Heart left ventricle (tissue), 16 donors: ENCODE measurements at regions of chr10 and their contacts with region 1.

Region 1: GRCh38 chr10:95480102-95480900 is 80.9 kb downstream of the SORBS1 start:
- DNase-seq: peak in 4 of 5 donors; percentile 61 to 74 (median 68)
- ATAC-seq: peak; percentile 35 to 71 (median 58)
- H3K4me3 ChIP-seq: peak overlapping the region in 7 of 12 donors; percentile 2 to 32 (median 10)
- H3K27ac ChIP-seq: peak overlapping the region; percentile 84 to 96 (median 91)
- H3K4me1 ChIP-seq: peaks cover 18 to 82% (median 72%) of the 10 kb centered on the region in 12 donors
- H3K27me3 ChIP-seq: no peaks in the 10 kb centered on the region
- CTCF ChIP-seq: peak in 4 of 12 donors; percentile 15 to 22 (median 20)
- POLR2A ChIP-seq: no peak

Region 2: DNA sequence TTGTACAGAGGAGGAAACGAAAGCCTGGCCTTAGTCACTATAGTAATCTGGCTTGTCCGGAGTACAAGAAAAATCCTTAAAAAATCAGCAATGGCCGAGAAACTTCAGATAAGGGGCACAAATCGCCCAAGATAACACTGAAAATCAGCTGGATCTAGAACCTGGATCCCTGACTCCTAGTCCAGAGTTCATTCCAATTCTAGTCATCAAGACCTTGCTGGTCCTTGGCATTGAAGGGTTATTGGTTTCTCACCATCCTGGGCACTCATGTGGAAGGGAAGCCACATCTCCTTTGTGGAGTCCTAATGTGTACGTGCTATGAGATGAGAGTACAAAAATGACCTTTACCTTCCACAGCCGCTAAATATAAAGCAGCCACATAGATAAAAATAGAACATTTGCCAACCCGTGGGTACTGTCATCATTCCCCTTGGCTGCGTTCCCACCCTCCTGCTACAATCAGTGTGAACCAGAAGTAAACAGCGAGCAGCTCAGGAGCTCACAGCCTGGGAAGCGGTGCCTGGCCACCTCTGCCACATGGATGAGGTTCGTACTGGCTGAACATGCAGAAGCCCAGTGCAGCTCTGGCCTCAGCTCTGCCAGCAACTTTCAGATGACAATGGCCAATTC is 73.5 kb before region 1 on chr10:
- intact Hi-C with region 1: no loop called
- DNase-seq: peak; percentile 80 to 94 (median 88)
- ATAC-seq: peak; percentile 65 to 83 (median 75)
- H3K4me3 ChIP-seq: no peak overlapping the region
- H3K27ac ChIP-seq: peak overlapping the region; percentile 63 to 98 (median 90)
- H3K4me1 ChIP-seq: peaks cover 20 to 80% (median 64%) of the 10 kb centered on the region in 12 donors
- H3K27me3 ChIP-seq: no peaks in the 10 kb centered on the region
- CTCF ChIP-seq: no peak
- POLR2A ChIP-seq: peak in 1 of 2 donors; percentile 63

Region 3: DNA sequence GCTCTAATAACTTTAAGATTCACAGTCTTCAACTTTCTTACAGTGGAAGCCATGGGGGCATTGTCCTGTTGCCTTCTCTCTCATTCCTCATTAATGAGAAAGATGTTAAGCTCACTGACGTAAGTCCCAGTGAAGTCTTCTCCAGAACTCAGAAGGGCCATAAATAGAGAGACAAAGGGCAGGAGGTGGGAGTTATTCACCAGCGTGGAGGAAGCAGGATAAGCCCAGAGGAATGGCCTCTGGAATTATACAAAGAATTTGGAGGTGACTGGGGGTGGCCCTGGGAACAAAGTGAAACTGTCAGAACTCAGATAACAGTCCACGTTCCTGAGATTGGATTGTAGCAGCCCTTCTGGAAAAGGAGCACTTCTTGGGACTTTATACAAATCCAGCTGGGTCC is 28.4 kb after region 1 on chr10:
- intact Hi-C with region 1: loop called in 1 of 10 experiments (anchors 2 kb)
- DNase-seq: peak in 3 of 5 donors; percentile 39 to 53 (median 45)
- ATAC-seq: peak; percentile 59 to 86 (median 80)
- H3K4me3 ChIP-seq: peak overlapping the region in 7 of 12 donors; percentile 3 to 21 (median 8)
- H3K27ac ChIP-seq: peak overlapping the region; percentile 73 to 92 (median 85)
- H3K4me1 ChIP-seq: peaks cover 10 to 99% (median 69%) of the 10 kb centered on the region in 12 donors
- H3K27me3 ChIP-seq: no peaks in the 10 kb centered on the region
- CTCF ChIP-seq: no peak
- POLR2A ChIP-seq: no peak